HCT116 (cell line): ENCODE measurements at regions of chr13 and their contacts with region 1.

Region 1: DNA sequence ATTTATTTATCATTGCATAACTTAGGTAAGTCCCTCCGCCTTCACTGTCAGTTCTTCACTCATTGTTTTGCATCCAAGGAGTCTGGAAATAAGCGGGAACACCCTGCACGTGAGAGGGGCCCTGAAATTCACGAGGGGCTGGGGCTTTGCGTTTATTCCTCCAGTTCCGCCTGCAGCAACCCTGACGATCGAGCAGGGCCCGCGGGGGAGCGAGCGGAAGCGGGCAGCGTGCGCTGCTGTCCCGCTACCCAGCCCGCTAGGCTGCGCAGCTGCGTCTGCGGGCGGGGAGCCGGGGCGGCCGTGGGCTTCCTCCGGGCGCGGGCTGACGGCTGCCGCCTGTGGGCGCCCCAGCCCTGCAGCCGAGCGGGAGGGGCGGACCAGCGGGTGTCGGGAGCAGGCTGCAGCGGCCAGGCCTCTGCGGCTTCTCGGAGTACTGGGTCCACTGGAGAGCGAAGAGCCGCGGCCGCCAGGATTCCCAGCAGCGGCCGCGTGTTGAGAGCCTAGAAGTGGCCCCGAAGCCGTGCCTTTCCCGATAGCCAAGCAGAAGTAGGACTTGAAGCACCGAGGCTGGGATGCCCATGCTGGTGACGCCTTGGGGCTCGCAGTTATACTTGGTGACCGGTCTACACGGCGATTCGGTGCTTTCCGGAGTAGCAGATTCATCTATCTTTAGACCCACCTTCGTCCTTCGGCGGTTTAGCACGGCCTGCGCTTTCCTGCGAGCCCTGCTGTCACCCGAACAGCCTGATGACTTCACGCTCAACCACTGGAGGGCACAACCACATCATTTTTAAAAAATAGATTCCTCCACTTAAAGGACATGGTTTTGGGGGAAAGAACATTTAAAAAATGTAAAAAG is 32.9 kb upstream of the SACS start:
- DNase-seq: peak; percentile 54
- ATAC-seq: peak; percentile 89
- H3K4me3 ChIP-seq: peak overlapping the region; percentile 38 to 51
- H3K27ac ChIP-seq: peak overlapping the region; percentile 46; the same call in 1 of the 2 replicates
- H3K4me1 ChIP-seq: peaks cover 7 to 11% of the 10 kb centered on the region in 2 experiments; a peak in 2 of 4 replicates
- H3K27me3 ChIP-seq: peaks cover 7% of the 10 kb centered on the region
- CTCF ChIP-seq: peak; percentile 45 to 54 (median 51); a peak in 5 of 6 replicates
- POLR2A ChIP-seq: no peak
- RAD21 ChIP-seq: peak; percentile 61

Region 2: DNA sequence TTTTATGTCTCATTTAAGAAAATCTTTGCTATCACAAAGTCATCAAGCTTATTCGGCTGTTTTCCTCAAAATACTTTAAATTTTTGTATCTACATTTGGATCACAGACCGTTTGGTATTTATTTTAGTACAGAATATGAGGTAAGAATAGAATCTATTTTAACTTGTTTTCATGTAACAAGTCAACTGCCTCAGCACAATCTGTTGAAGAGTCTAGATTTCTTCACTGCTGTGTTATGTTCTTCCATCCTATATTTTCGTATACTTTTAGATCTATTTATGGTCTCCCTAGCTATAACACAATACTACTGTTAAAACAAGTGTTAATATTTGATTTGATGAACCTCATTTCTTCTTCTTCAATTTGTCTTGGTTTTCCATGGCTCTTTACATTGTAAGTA is 347.2 kb before region 1 on chr13:
- CTCF ChIA-PET with region 1: no interaction called
- POLR2A ChIA-PET with region 1: no interaction called
- RAD21 ChIA-PET with region 1: no interaction called
- intact Hi-C with region 1: no loop called
- DNase-seq: no peak
- ATAC-seq: no peak
- H3K4me3 ChIP-seq: no peak overlapping the region
- H3K27ac ChIP-seq: no peak overlapping the region
- H3K4me1 ChIP-seq: no peaks in the 10 kb centered on the region
- H3K27me3 ChIP-seq: no peaks in the 10 kb centered on the region
- CTCF ChIP-seq: no peak
- POLR2A ChIP-seq: no peak
- RAD21 ChIP-seq: no peak

Region 3: GRCh38 chr13:23447927-23448326 is 18.4 kb before region 1 on chr13:
- CTCF ChIA-PET with region 1: no interaction called
- POLR2A ChIA-PET with region 1: no interaction called
- RAD21 ChIA-PET with region 1: no interaction called
- intact Hi-C with region 1: no loop called
- DNase-seq: no peak
- ATAC-seq: no peak
- H3K4me3 ChIP-seq: no peak overlapping the region
- H3K27ac ChIP-seq: no peak overlapping the region
- H3K4me1 ChIP-seq: no peaks in the 10 kb centered on the region
- H3K27me3 ChIP-seq: no peaks in the 10 kb centered on the region
- CTCF ChIP-seq: no peak
- POLR2A ChIP-seq: no peak
- RAD21 ChIP-seq: no peak

Region 4: GRCh38 chr13:23488458-23488857 is 22.1 kb after region 1 on chr13:
- CTCF ChIA-PET with region 1: no interaction called
- POLR2A ChIA-PET with region 1: no interaction called
- RAD21 ChIA-PET with region 1: no interaction called
- intact Hi-C with region 1: no loop called
- DNase-seq: no peak
- ATAC-seq: no peak
- H3K4me3 ChIP-seq: no peak overlapping the region
- H3K27ac ChIP-seq: no peak overlapping the region
- H3K4me1 ChIP-seq: no peaks in the 10 kb centered on the region
- H3K27me3 ChIP-seq: no peaks in the 10 kb centered on the region
- CTCF ChIP-seq: no peak
- POLR2A ChIP-seq: no peak
- RAD21 ChIP-seq: no peak

Region 5: GRCh38 chr13:23579072-23579895 is 112.9 kb after region 1 on chr13:
- CTCF ChIA-PET with region 1: no interaction called
- POLR2A ChIA-PET with region 1: no interaction called
- RAD21 ChIA-PET with region 1: no interaction called
- intact Hi-C with region 1: loop called (anchors 5 kb)
- DNase-seq: peak; percentile 54
- ATAC-seq: peak; percentile 96
- H3K4me3 ChIP-seq: peak overlapping the region; percentile 67 to 74
- H3K27ac ChIP-seq: peak overlapping the region; percentile 69; the same call in 1 of the 2 replicates
- H3K4me1 ChIP-seq: peaks cover 3 to 15% of the 10 kb centered on the region in 2 experiments; a peak in 1 of 4 replicates
- H3K27me3 ChIP-seq: no peaks in the 10 kb centered on the region
- CTCF ChIP-seq: no peak
- POLR2A ChIP-seq: no peak
- RAD21 ChIP-seq: no peak

Region 6: DNA sequence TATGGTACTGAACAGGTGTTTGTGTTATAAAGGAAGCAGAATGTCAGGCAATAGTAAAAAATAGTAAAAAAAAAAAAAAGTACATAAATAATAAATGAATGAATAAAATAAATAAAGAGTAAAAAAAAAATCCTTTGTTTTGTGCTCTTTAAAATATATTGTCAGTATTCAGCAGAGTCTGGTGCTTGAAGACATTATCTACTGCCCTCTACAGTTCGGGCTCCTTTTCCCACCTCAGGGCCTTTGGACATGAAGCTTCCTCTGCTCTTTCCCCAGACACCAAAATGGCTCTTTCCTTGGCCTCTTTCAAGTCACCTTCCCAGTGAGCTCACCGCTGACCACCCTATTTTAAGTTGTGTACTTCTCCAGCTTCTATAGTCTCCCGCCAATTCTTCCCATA is 241.3 kb after region 1 on chr13:
- CTCF ChIA-PET with region 1: interaction called, 5 read pairs
- POLR2A ChIA-PET with region 1: no interaction called
- RAD21 ChIA-PET with region 1: no interaction called
- intact Hi-C with region 1: loop called (anchors 2 kb)
- DNase-seq: peak; percentile 24
- ATAC-seq: no peak; the same call in 1 of the 2 replicates
- H3K4me3 ChIP-seq: no peak overlapping the region
- H3K27ac ChIP-seq: no peak overlapping the region
- H3K4me1 ChIP-seq: no peaks in the 10 kb centered on the region
- H3K27me3 ChIP-seq: no peaks in the 10 kb centered on the region
- CTCF ChIP-seq: peak; percentile 15 to 39 (median 19); a peak in 3 of 6 replicates
- POLR2A ChIP-seq: no peak
- RAD21 ChIP-seq: peak; percentile 41

Region 7: GRCh38 chr13:23871616-23872220 is 405.3 kb after region 1 on chr13:
- CTCF ChIA-PET with region 1: interaction called, 4 read pairs
- POLR2A ChIA-PET with region 1: no interaction called
- RAD21 ChIA-PET with region 1: interaction called in 1 of 2 experiments, 4 read pairs
- intact Hi-C with region 1: loop called (anchors 1 kb)
- DNase-seq: no peak
- ATAC-seq: no peak
- H3K4me3 ChIP-seq: no peak overlapping the region
- H3K27ac ChIP-seq: no peak overlapping the region
- H3K4me1 ChIP-seq: 0 out of 4 replicates have a peak, but pooled peaks cover 0 to 2% of the 10 kb centered on the region in 2 experiments
- H3K27me3 ChIP-seq: no peaks in the 10 kb centered on the region
- CTCF ChIP-seq: peak; percentile 30 to 61 (median 37); a peak in 4 of 6 replicates
- POLR2A ChIP-seq: no peak
- RAD21 ChIP-seq: peak; percentile 54

Region 8: DNA sequence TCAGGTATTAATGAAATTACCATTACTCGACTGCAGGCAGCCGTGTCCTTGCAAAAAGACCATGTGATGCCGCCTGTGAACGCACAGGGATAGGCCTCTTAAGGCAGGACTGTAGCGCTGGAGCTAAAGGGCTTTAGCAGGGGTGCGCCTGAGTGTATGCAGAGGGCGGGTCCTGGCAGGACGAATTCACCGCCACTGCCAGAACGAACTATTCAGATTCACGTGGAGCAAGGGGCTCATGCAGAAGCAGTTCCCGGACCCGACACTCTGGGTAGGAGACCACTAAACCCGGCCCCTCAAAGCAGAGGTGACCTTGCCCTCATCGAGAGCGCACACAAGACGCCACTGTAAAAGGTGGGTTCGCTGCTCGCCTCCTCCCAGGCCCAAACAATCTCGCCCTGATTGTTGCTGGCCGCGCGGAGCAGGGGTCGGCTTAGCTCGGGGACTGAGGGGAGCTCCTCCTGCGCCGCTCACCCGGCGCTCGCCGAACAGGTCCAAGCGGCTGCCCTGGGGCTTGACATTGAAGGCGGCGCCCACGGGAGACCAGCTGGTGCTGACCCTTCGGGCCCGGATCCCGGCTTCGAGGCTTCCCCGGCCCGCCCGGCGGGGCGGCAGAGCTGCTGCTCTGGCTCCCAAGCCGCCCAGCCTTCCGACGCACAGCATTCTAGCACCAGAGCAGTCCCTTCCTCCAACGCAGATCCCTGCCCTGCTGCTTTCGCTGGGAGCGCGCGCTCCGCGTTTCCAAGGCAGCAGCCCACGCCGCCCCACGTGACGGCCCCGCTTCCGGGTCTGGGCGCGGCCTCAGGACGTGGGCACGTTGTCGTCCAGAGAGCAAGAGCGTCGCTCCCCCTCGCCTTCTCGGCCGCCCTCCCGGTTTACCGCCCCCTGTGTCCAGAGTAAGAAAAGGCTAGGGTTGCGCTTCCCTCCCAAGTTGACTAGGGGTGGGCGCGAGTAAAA is 422.6 kb after region 1 on chr13 and contains the start of gene MIPEP:
- CTCF ChIA-PET with region 1: interaction called, 12 read pairs
- POLR2A ChIA-PET with region 1: no interaction called
- RAD21 ChIA-PET with region 1: no interaction called
- intact Hi-C with region 1: no loop called
- DNase-seq: peak; percentile 88
- ATAC-seq: peak; percentile 90
- H3K4me3 ChIP-seq: peak within 1 kb of the TSS; percentile 74 to 98
- H3K27ac ChIP-seq: peak within 1 kb of the TSS; percentile 76
- H3K4me1 ChIP-seq: peaks cover 13 to 15% of the 10 kb centered on the region in 2 experiments; a peak in 3 of 4 replicates
- H3K27me3 ChIP-seq: no peaks in the 10 kb centered on the region
- CTCF ChIP-seq: peak; percentile 58 to 70 (median 69)
- POLR2A ChIP-seq: peak; percentile 68
- RAD21 ChIP-seq: no peak
- total RNA-seq, gene MIPEP: 33.3 TPM

Region 9: DNA sequence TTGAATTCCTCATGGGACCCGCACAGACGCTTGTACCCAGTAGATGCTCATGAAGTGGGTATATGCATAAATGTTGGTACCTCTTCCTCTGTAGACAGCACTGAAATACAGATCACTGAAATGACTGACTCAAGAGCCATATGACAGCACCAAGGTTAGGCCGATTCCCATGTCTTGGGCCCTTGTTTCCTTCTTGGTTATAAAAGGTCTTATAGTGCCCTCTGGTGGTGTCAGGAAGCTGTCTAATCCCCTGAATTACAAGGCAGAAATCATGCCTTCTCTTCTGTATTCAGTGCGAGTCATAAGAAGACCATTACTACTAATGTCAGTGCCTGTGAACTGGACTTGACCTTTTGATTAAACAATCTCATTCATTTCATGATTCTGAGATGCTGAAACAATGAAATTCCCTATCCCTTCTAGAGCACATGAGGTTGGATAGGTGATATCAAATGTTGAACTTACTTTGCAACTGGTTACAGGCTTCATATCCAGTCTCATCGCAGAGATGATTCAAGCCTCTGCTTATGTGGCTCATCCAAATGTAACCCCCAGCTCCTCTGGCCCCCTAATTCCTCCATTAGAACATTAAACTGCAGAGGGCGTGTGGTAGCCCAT is 753.8 kb after region 1 on chr13:
- CTCF ChIA-PET with region 1: no interaction called
- POLR2A ChIA-PET with region 1: no interaction called
- RAD21 ChIA-PET with region 1: no interaction called
- intact Hi-C with region 1: loop called (anchors 10 kb)
- DNase-seq: peak; percentile 70
- ATAC-seq: peak; percentile 94
- H3K4me3 ChIP-seq: no peak overlapping the region
- H3K27ac ChIP-seq: no peak overlapping the region
- H3K4me1 ChIP-seq: peaks cover 11 to 13% of the 10 kb centered on the region in 2 experiments; a peak in 3 of 4 replicates
- H3K27me3 ChIP-seq: no peaks in the 10 kb centered on the region
- CTCF ChIP-seq: peak; percentile 69 to 83 (median 81)
- POLR2A ChIP-seq: no peak
- RAD21 ChIP-seq: peak; percentile 91